ENCODE measurements at regions of chr6 and their contacts with region 1.

Region 1: GRCh38 chr6:138428944-138429598 is 25.0 kb downstream of the HEBP2 start:
- DNase-seq: no peak
- H3K4me3 ChIP-seq: peak overlapping the region in 3 of 4 donors; percentile 0 to 18 (median 13)
- H3K27ac ChIP-seq: peak overlapping the region in 3 of 4 donors; percentile 39 to 51 (median 47)
- H3K4me1 ChIP-seq: peaks cover 0 to 21% (median 15%) of the 10 kb centered on the region in 4 donors
- H3K27me3 ChIP-seq: no peaks in the 10 kb centered on the region
- CTCF ChIP-seq: peak in 3 of 4 experiments; percentile 26 to 60 (median 49)
- EP300 ChIP-seq: no peak
- POLR2A ChIP-seq: no peak

Region 2: DNA sequence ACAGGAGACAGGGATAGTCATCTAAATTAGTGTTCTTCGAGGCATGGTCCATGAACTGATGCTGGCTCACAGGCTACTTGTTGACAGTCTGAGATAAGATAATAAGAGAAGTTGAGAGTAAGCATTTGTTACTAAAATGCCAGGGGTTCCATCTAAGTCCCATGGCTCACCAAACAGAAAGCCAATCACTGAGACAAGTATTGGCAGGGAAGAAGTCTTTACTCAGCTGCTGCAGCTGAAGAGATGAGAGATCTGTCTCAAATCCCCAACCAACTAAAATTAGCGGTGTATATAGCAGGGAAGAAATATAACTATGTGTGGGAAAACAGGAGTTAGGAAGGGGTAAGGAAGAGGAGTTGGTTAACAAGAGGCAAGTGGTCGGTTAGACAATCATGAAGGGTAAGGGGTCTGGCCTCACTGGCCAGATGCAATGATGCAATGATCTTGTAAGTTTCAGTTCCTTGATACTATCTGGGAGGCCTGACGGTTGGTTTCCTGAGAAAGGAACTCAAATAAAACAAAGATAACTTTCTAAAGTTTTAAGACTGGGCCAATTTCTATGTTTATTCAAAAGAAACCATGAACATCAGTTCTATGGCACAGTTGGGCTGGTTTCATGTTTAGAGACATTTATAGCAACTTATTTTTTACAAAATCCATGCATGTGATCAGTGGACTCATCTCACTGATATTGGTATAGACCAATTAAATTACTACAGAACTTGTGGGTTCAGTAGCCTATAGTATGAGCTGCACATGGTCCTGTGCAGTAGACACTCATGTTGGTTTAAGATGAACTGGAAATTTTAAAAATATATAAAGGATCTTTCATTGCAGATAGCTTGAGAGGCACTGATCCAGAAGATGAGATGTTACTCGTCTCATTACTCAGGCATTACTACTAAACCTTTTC is 34.9 kb before region 1 on chr6:
- intact Hi-C with region 1: no loop called
- DNase-seq: no peak
- H3K4me3 ChIP-seq: no peak overlapping the region
- H3K27ac ChIP-seq: no peak overlapping the region
- H3K4me1 ChIP-seq: no peaks in the 10 kb centered on the region
- H3K27me3 ChIP-seq: no peaks in the 10 kb centered on the region
- CTCF ChIP-seq: no peak
- EP300 ChIP-seq: no peak
- POLR2A ChIP-seq: no peak

Region 3: DNA sequence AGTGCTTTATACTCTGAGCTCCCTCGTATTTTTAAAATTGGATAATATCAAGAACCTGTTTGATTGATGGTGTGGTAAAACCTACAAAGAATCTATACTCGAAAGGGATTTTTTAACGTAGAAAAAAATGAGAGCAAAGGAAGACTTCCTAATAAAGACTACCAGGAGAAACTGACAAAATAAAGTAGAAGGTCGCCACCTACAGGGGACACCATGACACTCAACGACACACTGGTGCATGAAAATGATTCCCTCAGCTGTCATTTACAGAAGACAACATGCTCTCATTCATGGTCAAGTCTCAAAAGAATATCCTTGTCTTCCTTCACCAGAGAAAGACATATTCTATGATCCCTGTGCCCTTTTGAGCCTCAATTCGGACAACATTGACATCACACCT is 80.3 kb after region 1 on chr6:
- intact Hi-C with region 1: loop called (anchors 2 kb)
- DNase-seq: peak; percentile 65
- H3K4me3 ChIP-seq: no peak overlapping the region
- H3K27ac ChIP-seq: no peak overlapping the region
- H3K4me1 ChIP-seq: no peaks in the 10 kb centered on the region
- H3K27me3 ChIP-seq: no peaks in the 10 kb centered on the region
- CTCF ChIP-seq: peak in 3 of 4 experiments; percentile 45 to 56 (median 47)
- EP300 ChIP-seq: no peak
- POLR2A ChIP-seq: no peak

Region 4: DNA sequence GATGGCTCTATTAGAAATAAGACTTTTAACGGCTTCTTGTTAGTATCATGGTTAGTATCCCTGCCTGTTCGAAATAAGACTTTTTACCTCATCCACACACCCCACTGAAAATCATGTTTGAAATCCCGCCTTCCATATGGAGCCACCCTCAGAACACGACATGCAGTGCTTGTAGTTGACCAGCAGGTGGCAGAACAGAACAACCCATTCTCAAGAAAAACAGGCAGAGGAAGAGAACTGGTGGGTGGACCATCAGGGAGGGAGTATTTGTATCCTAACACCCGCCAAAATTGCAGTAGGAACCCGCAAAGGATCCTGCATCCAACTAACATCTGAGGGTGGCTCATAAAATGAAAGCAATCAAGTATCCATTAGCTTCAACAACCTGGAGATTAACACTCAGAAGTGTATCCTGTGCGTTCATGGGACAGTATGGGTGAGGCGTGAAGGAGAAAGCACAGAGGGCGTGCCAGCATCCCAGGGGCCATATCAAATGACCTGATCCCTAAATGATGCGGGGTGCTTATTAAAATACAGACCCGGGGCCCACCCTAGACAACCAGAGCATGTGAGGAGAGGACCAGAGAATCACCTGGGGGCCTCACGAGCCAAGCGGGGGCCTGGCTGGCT is 159.8 kb after region 1 on chr6:
- intact Hi-C with region 1: loop called (anchors 1 kb)
- DNase-seq: peak; percentile 70
- H3K4me3 ChIP-seq: no peak overlapping the region
- H3K27ac ChIP-seq: no peak overlapping the region
- H3K4me1 ChIP-seq: peaks cover 0 to 6% (median 0%) of the 10 kb centered on the region in 4 donors
- H3K27me3 ChIP-seq: no peaks in the 10 kb centered on the region
- CTCF ChIP-seq: peak; percentile 76 to 92 (median 86)
- EP300 ChIP-seq: no peak
- POLR2A ChIP-seq: no peak

Measured in sigmoid colon (tissue), 7 donors.